ENCODE measurements at regions of chr6 and their contacts with region 1.

Region 1: DNA sequence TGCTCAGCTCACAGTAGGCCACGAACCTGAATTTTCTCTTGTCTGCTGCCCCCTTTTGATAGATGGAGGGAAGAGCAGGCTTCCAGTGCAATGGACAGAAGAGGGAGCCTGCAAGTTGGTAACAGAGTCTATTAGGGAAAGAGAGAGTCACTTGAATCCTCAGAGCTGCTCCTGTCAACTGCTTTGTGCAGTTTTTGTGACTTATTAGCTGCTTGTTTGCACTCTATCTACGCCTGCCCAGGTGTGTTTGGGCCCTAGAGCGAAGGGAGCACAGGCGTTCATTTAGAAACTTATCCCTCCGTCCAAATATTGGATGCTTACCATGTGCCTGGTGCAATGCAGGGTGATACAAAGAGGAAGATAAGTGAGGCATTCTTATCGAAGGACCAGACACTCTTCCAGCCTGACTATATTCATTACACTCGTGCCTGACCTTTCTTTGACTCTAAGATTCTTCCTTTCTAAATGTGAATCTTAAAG is 11.6 kb upstream of the SLC2A12 start:
- DNase-seq: peak in 1 of 2 donors; percentile 85
- H3K4me3 ChIP-seq: no peak overlapping the region
- H3K27ac ChIP-seq: no peak overlapping the region
- H3K4me1 ChIP-seq: peaks cover 2% of the 10 kb centered on the region
- H3K27me3 ChIP-seq: no peaks in the 10 kb centered on the region
- CTCF ChIP-seq: peak; percentile 68 to 71 (median 70)
- POLR2A ChIP-seq: no peak

Region 2: GRCh38 chr6:133973109-133973971 is 90.7 kb before region 1 on chr6:
- intact Hi-C with region 1: loop called (anchors 2 kb)
- DNase-seq: no peak
- H3K4me3 ChIP-seq: no peak overlapping the region
- H3K27ac ChIP-seq: peak overlapping the region; percentile 10
- H3K4me1 ChIP-seq: peaks cover 29% of the 10 kb centered on the region
- H3K27me3 ChIP-seq: no peaks in the 10 kb centered on the region
- CTCF ChIP-seq: peak; percentile 46 to 55 (median 47)
- POLR2A ChIP-seq: no peak